HepG2 (cell line): ENCODE measurements at regions of chr15 and their contacts with region 1.

Region 1: GRCh38 chr15:54850132-54850531 is 346.6 kb downstream of the RSL24D1 start:
- DNase-seq: no peak
- ATAC-seq: no peak
- H3K4me3 ChIP-seq: no peak overlapping the region
- H3K27ac ChIP-seq: no peak overlapping the region
- H3K4me1 ChIP-seq: no peaks in the 10 kb centered on the region
- H3K27me3 ChIP-seq: no peaks in the 10 kb centered on the region
- CTCF ChIP-seq: no peak
- EP300 ChIP-seq: no peak
- POLR2A ChIP-seq: no peak
- RAD21 ChIP-seq: no peak

Region 2: DNA sequence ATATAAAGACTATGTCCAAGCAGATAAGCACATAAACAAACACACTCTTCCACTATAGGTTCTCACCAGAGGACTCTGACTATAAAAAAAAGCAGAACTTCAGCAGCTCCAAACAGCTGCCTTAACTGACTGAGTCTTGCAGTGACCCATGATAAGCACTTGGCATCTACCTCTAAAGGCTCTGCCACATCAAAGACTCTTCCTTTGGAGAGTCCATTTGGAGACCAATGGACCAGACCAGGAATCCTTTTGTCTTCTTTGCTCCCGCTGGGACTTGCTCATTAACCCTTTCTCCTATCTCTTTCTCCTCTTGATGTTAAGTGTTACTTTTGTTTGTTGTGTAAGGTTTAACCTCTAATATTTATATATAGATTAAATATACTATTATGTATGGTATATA is 77.5 kb before region 1 on chr15:
- CTCF ChIA-PET with region 1: no interaction called
- POLR2A ChIA-PET with region 1: no interaction called
- in situ Hi-C with region 1: loop called (anchors 25 kb)
- intact Hi-C with region 1: no loop called
- DNase-seq: no peak
- ATAC-seq: no peak
- H3K4me3 ChIP-seq: no peak overlapping the region
- H3K27ac ChIP-seq: no peak overlapping the region
- H3K4me1 ChIP-seq: no peaks in the 10 kb centered on the region
- H3K27me3 ChIP-seq: no peaks in the 10 kb centered on the region
- CTCF ChIP-seq: no peak
- EP300 ChIP-seq: no peak
- POLR2A ChIP-seq: no peak
- RAD21 ChIP-seq: no peak

Region 3: DNA sequence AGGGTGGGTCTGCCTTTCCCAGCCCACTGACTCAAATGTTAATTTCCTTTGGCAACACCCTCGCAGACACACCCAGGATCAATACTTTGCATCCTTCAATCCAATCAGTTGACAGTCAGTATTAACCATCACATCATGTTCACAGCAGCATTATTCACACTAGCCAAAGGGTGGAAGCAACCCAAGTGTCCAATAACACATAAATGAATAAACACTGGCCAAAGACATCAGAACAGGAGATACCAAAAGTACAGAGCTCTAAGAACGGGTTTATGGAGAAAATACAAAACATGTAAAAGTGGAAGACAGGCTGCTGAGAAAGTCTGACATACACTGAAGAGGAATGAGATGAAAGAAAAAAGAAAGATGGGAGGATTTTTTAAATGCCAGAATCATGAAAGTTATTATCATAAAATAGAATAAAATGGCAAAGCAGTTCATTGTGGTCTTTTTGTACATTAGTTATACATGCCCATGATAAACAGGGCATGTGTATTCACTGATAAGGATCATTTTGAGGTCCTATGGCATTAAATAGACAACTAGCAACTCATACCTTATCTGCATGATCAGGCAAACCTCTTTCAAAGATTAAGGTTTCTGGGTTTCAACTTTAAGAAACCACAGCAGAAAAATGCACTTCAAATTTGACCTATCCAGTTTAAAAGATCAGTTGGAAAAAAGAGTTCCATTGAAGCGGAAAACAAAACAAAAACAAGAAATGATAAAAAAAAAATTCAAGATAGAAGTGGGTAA is 635.0 kb after region 1 on chr15:
- CTCF ChIA-PET with region 1: no interaction called
- POLR2A ChIA-PET with region 1: no interaction called
- in situ Hi-C with region 1: no loop called
- intact Hi-C with region 1: no loop called
- DNase-seq: no peak
- ATAC-seq: no peak
- H3K4me3 ChIP-seq: no peak overlapping the region
- H3K27ac ChIP-seq: no peak overlapping the region
- H3K4me1 ChIP-seq: peaks cover 5% of the 10 kb centered on the region
- H3K27me3 ChIP-seq: no peaks in the 10 kb centered on the region
- CTCF ChIP-seq: no peak
- EP300 ChIP-seq: no peak
- POLR2A ChIP-seq: no peak
- RAD21 ChIP-seq: no peak